Gastrocnemius medialis (tissue), 4 donors: ENCODE measurements at regions of chr5 and their contacts with region 1.

Region 1: GRCh38 chr5:123671042-123671441 is 159.1 kb downstream of the CSNK1G3 start:
- DNase-seq: peak in 1 of 2 donors; percentile 18
- ATAC-seq: peak in 1 of 2 donors; percentile 36
- H3K4me3 ChIP-seq: no peak overlapping the region
- H3K27ac ChIP-seq: no peak overlapping the region
- H3K4me1 ChIP-seq: peaks cover 15 to 22% of the 10 kb centered on the region in 2 donors
- H3K27me3 ChIP-seq: no peaks in the 10 kb centered on the region
- CTCF ChIP-seq: peak; percentile 52 to 85 (median 72)
- POLR2A ChIP-seq: no peak

Region 2: GRCh38 chr5:124176691-124177090 is 505.6 kb after region 1 on chr5:
- in situ Hi-C with region 1: no loop called
- intact Hi-C with region 1: loop called (anchors 5 kb)
- DNase-seq: peak; percentile 16 to 34
- ATAC-seq: peak; percentile 84 to 87
- H3K4me3 ChIP-seq: no peak overlapping the region
- H3K27ac ChIP-seq: no peak overlapping the region
- H3K4me1 ChIP-seq: no peaks in the 10 kb centered on the region
- H3K27me3 ChIP-seq: no peaks in the 10 kb centered on the region
- CTCF ChIP-seq: peak in 1 of 5 experiments; percentile 15
- POLR2A ChIP-seq: no peak